Ovary (tissue), 10 donors: ENCODE measurements at regions of chr4 and their contacts with region 1.

Region 1: GRCh38 chr4:7769396-7770223 is 170.1 kb downstream of the AFAP1 start:
- DNase-seq: peak in 1 of 5 donors; percentile 29
- H3K4me3 ChIP-seq: no peak overlapping the region
- H3K27ac ChIP-seq: no peak overlapping the region
- H3K4me1 ChIP-seq: peaks cover 3% of the 10 kb centered on the region
- H3K27me3 ChIP-seq: no peaks in the 10 kb centered on the region
- CTCF ChIP-seq: no peak
- EP300 ChIP-seq: no peak
- POLR2A ChIP-seq: no peak

Region 2: GRCh38 chr4:7750523-7750922 is 19.1 kb before region 1 on chr4:
- intact Hi-C with region 1: loop called in 1 of 4 experiments (anchors 2 kb)
- DNase-seq: no peak
- H3K4me3 ChIP-seq: no peak overlapping the region
- H3K27ac ChIP-seq: no peak overlapping the region
- H3K4me1 ChIP-seq: peaks cover 6% of the 10 kb centered on the region
- H3K27me3 ChIP-seq: no peaks in the 10 kb centered on the region
- CTCF ChIP-seq: no peak
- EP300 ChIP-seq: no peak
- POLR2A ChIP-seq: no peak